K562 (cell line): ENCODE measurements at regions of chr6 and their contacts with region 1.

Region 1: GRCh38 chr6:1701668-1702353 is 92.1 kb downstream of the FOXC1 start:
- DNase-seq: no peak
- ATAC-seq: no peak
- H3K4me3 ChIP-seq: no peak overlapping the region
- H3K27ac ChIP-seq: no peak overlapping the region
- H3K4me1 ChIP-seq: peaks cover 25 to 26% of the 10 kb centered on the region in 2 experiments; a peak in 4 of 5 replicates
- H3K27me3 ChIP-seq: peaks cover 6 to 30% of the 10 kb centered on the region in 2 experiments; a peak in 2 of 5 replicates
- CTCF ChIP-seq: no peak
- EP300 ChIP-seq: no peak
- POLR2A ChIP-seq: no peak
- RAD21 ChIP-seq: no peak

Region 2: DNA sequence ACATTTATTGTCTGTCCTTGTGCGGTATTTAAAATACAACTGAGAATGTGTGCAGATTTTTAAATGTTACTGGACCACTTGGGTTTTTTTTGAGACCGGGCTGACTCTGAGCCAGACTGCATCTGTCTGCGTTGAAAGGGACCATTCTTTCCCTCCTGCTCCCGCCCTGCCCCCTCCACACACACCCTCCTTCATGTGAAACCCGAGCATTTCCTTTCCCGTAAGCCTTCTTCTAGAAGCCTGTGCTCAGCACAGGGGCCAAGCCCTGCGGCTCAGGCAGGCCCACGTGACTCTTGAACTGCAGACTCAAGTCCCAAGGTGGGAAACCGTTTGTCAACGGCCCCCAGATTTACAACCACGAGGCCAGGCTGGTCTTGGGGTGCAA is 174.7 kb before region 1 on chr6:
- CTCF ChIA-PET with region 1: no interaction called
- POLR2A ChIA-PET with region 1: no interaction called
- in situ Hi-C with region 1: no loop called
- intact Hi-C with region 1: no loop called
- DNase-seq: no peak
- ATAC-seq: no peak
- H3K4me3 ChIP-seq: no peak overlapping the region
- H3K27ac ChIP-seq: no peak overlapping the region
- H3K4me1 ChIP-seq: peaks cover 0 to 8% of the 10 kb centered on the region in 2 experiments; a peak in 2 of 5 replicates
- H3K27me3 ChIP-seq: peaks cover 8 to 56% of the 10 kb centered on the region in 2 experiments
- CTCF ChIP-seq: no peak
- EP300 ChIP-seq: no peak
- POLR2A ChIP-seq: no peak
- RAD21 ChIP-seq: no peak

Region 3: GRCh38 chr6:1686117-1687098 is 15.4 kb before region 1 on chr6:
- CTCF ChIA-PET with region 1: no interaction called
- POLR2A ChIA-PET with region 1: interaction called, 10 read pairs
- in situ Hi-C with region 1: no loop called
- intact Hi-C with region 1: no loop called
- DNase-seq: no peak
- ATAC-seq: no peak
- H3K4me3 ChIP-seq: no peak overlapping the region
- H3K27ac ChIP-seq: no peak overlapping the region
- H3K4me1 ChIP-seq: no peaks in the 10 kb centered on the region
- H3K27me3 ChIP-seq: peaks cover 20 to 44% of the 10 kb centered on the region in 2 experiments
- CTCF ChIP-seq: peak in 1 of 3 experiments; percentile 38; a peak in 2 of 6 replicates
- EP300 ChIP-seq: no peak
- POLR2A ChIP-seq: no peak
- RAD21 ChIP-seq: peak in 1 of 2 experiments; percentile 34; a peak in 1 of 4 replicates